CD8-positive, alpha-beta T cell (primary cell): ENCODE measurements at regions of chr17 and their contacts with region 1.

Region 1: GRCh38 chr17:47315451-47316266 is 8.1 kb upstream of the EFCAB13 start:
- DNase-seq: peak in 3 of 9 experiments; percentile 37 to 74 (median 64)
- ATAC-seq: peak; percentile 93
- H3K4me3 ChIP-seq: no peak overlapping the region
- H3K4me3 Mint-ChIP-seq: no peak overlapping the region
- H3K27ac ChIP-seq: no peak overlapping the region
- H3K27ac Mint-ChIP-seq: no peak overlapping the region
- H3K4me1 ChIP-seq: no peaks in the 10 kb centered on the region
- H3K4me1 Mint-ChIP-seq: no peaks in the 10 kb centered on the region
- H3K27me3 ChIP-seq: no peaks in the 10 kb centered on the region
- H3K27me3 Mint-ChIP-seq: no peaks in the 10 kb centered on the region
- CTCF ChIP-seq: peak; percentile 79

Region 2: DNA sequence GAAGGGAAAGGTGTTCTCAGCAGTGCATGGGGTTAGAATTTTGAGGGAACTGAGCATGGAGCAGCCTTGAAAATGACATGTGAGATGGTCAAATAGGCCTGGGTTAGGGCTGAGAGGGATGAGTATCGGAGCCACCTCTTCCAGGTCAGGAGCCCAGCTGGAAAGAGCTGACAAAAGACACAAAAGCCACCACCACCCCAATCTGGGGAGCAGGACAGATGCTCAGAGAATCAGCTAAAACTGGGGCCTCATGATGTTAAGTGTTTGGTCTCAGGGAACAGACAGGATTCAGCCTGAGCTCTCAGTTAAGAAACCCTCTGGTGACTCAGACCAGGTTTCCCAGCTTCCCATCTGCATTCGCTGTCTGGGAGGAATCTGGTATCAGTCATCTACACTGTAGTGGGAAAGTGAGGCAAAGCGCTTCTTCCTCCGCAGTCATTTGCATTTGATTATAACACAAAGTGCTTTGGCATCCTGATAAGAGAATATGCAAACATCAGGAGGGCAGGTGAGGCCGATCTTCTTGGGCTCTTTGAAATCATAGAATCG is 461.7 kb before region 1 on chr17:
- CTCF ChIA-PET with region 1: no interaction called
- POLR2A ChIA-PET with region 1: no interaction called
- intact Hi-C with region 1: no loop called
- DNase-seq: no peak
- ATAC-seq: no peak
- H3K4me3 ChIP-seq: no peak overlapping the region
- H3K4me3 Mint-ChIP-seq: no peak overlapping the region
- H3K27ac ChIP-seq: no peak overlapping the region
- H3K27ac Mint-ChIP-seq: no peak overlapping the region
- H3K4me1 ChIP-seq: peaks cover 5% of the 10 kb centered on the region
- H3K4me1 Mint-ChIP-seq: peaks cover 10% of the 10 kb centered on the region
- H3K27me3 ChIP-seq: peaks cover 14 to 15% of the 10 kb centered on the region in 2 experiments
- H3K27me3 Mint-ChIP-seq: peaks cover 61% of the 10 kb centered on the region
- CTCF ChIP-seq: no peak

Region 3: DNA sequence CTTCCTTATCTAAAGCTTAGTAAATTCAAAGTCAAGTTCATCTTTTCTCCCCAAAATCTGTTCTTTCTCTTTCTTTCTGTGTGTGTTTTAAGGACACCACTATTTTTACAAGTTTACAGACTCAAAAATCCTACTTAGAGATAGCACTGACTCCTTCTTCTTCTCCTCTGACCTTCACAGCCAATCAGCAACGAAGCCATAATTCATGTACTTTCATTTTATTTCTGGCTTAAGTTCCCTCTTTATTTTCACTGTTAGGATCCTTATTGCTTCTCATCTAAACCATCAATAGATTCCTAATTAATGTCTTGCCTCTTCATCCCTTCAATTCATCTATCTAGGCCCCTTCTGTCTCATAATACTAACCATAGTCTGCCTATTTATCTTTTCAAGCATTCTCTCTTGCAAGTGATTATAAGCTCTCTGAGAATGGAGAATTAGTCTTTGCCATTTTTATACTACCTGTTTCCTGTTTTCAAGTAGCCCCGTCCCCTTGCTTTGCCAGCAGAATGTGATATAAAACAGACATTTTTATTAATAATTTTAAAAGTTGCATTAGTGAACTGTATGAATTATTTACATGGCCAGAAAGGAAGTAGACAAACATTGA is 153.5 kb before region 1 on chr17:
- CTCF ChIA-PET with region 1: no interaction called
- POLR2A ChIA-PET with region 1: no interaction called
- intact Hi-C with region 1: loop called in 1 of 2 experiments (anchors 5 kb)
- DNase-seq: no peak
- ATAC-seq: no peak
- H3K4me3 ChIP-seq: no peak overlapping the region
- H3K4me3 Mint-ChIP-seq: peak overlapping the region; percentile 30
- H3K27ac ChIP-seq: no peak overlapping the region
- H3K27ac Mint-ChIP-seq: peak overlapping the region; percentile 66
- H3K4me1 ChIP-seq: no peaks in the 10 kb centered on the region
- H3K4me1 Mint-ChIP-seq: peaks cover 12% of the 10 kb centered on the region
- H3K27me3 ChIP-seq: no peaks in the 10 kb centered on the region
- H3K27me3 Mint-ChIP-seq: no peaks in the 10 kb centered on the region
- CTCF ChIP-seq: no peak

Region 4: DNA sequence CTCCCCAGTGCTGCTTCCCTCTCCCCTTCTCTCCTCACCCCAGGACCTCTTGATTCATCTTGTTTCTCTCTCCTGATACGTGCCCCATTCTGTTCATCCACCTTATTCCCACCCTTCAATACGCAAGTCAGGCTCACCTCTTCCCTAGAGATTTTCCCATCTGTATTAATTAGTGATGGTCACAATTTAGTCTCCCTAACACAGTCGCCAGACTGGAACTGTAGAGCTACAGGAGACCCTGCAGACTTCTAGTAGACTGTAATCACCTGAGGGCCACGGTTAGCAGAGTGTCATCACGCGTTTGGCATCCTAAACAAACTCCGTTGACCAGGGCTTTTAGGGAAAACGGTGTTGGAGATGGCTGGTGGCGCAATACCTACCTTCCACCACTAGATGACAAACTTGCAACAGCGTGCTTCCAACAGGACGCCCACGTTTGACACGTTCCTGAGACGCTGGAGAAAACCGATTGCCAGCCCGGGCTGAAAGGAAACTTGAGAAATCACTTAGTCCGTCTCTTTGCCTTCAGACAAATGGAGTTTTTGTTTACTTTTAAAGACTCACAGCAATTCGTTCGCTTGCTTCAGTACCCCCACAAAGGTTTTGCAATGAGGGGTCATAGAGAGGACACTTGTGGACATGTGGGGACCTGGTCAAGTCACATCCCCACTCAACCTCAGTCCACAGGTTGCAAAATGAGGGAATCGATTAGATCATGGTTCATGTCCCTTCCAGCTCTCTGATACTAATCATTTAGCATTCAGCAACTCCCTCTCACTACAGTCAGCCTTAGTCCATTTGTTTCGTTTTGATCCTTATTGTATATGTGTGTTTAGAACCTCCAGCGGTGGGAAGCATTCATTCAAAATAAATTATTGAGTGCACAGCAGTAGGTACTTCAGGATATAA is 85.9 kb before region 1 on chr17:
- CTCF ChIA-PET with region 1: interaction called, 7 read pairs
- POLR2A ChIA-PET with region 1: interaction called, 4 read pairs
- intact Hi-C with region 1: loop called (anchors 1 kb)
- DNase-seq: peak; percentile 31 to 87 (median 67)
- ATAC-seq: peak; percentile 98
- H3K4me3 ChIP-seq: peak overlapping the region in 1 of 2 experiments; percentile 13
- H3K4me3 Mint-ChIP-seq: peak overlapping the region; percentile 69
- H3K27ac ChIP-seq: no peak overlapping the region
- H3K27ac Mint-ChIP-seq: no peak overlapping the region
- H3K4me1 ChIP-seq: peaks cover 3% of the 10 kb centered on the region
- H3K4me1 Mint-ChIP-seq: peaks cover 11% of the 10 kb centered on the region
- H3K27me3 ChIP-seq: no peaks in the 10 kb centered on the region
- H3K27me3 Mint-ChIP-seq: no peaks in the 10 kb centered on the region
- CTCF ChIP-seq: peak; percentile 98

Region 5: GRCh38 chr17:47295062-47295845 is 20.4 kb before region 1 on chr17:
- CTCF ChIA-PET with region 1: no interaction called
- POLR2A ChIA-PET with region 1: no interaction called
- intact Hi-C with region 1: no loop called
- DNase-seq: no peak
- ATAC-seq: no peak
- H3K4me3 ChIP-seq: no peak overlapping the region
- H3K4me3 Mint-ChIP-seq: no peak overlapping the region
- H3K27ac ChIP-seq: no peak overlapping the region
- H3K27ac Mint-ChIP-seq: no peak overlapping the region
- H3K4me1 ChIP-seq: no peaks in the 10 kb centered on the region
- H3K4me1 Mint-ChIP-seq: no peaks in the 10 kb centered on the region
- H3K27me3 ChIP-seq: no peaks in the 10 kb centered on the region
- H3K27me3 Mint-ChIP-seq: peaks cover 11% of the 10 kb centered on the region
- CTCF ChIP-seq: no peak